GM13976 (cell line): ENCODE measurements at regions of chr7 and their contacts with region 1.

Region 1: DNA sequence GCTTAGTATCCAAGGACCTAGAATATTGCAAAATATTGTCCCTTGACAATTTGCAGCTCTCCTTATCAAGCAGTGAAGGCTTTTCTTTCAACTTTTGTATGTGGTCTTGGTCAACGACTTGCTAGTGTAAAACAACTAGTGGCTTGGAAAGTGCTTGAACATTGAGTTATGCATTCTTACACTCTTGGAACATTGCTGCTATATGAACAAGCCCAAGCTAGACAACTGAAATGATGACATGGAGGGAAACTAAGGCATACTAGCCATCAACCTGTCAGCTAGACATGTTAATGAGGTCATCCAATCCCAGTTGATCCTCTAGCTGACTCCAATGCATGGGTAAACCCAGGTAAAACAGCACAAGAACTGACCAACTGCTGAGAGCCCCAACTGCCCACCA is 12.7 kb upstream of the DMTF1 start:
- DNase-seq: no peak
- CTCF ChIP-seq: no peak

Region 2: DNA sequence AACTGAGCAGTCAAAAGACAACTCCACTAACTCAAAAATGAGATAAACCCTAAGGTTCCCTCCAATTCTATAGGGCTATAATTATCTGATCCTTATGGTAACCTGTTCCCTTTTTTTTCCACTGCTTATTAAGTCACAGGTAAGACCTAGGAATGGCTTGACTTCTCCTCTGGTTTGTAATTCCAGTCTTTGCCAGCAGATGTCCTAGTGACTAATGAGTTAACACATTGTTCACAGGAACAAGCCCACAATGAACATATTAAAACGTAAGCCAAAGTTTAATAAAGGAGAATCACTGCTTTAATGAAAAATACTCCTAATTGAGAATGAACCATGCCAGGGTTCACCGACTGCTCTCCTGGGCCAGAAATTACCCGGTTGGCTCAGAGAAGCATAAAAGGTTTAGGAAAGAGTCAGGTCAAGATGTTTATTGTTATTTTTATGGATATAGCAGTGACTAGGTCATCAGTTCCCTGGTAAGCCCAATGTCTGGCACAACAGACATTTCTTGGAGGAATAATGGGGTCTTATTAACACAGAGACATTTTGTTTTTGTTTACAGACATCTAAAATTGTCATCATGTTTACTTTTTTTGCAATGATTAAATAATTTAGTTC is 200.2 kb before region 1 on chr7:
- in situ Hi-C with region 1: loop called (anchors 5 kb)
- DNase-seq: no peak
- CTCF ChIP-seq: peak; percentile 52

Region 3: GRCh38 chr7:86963599-86964230 is 175.8 kb before region 1 on chr7:
- in situ Hi-C with region 1: no loop called
- DNase-seq: no peak
- CTCF ChIP-seq: no peak